ENCODE measurements at regions of chr1 and their contacts with region 1.

Region 1: GRCh38 chr1:247487057-247487456 is 29.2 kb upstream of the OR2B11 start:
- DNase-seq: peak in 23 of 42 donors; percentile 7 to 71 (median 36)

Region 2: DNA sequence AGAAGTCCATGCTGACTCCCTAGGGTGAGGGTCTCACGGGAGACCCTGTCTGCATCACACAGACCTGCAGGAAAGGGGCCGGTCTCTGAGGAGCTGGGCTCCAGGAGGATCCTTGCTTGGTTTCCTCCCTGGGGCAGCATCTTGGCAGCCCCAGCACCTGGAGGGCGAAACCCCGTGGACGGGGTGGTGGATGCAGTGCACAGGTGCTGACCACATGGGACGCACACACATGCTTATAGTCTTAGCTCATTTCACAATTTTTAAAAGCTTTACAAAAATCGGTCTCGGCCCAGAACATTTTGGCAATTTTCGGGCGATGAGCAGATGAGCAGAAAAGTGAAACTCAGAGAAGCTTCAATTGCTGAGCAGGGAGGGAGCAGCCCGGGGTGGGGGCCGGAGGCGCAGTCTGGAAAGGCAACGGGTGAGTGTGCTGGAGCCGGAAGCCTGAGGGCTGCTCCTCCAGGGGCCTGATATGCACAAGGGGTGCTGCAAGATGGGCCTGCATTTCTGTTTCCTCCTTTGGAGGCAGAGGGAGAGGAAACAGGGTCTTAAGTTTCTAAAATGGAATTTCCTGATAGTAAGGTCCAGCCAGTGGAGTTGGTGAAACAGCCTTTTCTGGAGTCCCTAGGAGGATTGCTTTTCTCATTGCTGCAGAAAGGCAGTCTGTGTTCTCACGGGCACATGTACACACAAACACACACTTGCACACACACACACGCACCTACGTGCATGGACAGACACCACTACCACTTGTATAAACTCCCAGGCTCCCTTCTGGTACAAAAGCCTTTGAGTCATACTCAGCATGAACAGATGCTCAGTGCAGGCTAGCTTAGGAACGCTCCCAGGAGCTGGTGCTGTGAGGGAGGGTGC is 702.2 kb before region 1 on chr1:
- intact Hi-C with region 1: no loop called
- DNase-seq: no peak

Region 3: GRCh38 chr1:247316590-247317197 is 170.4 kb before region 1 on chr1:
- intact Hi-C with region 1: no loop called
- DNase-seq: no peak

Region 4: GRCh38 chr1:247373721-247374141 is 113.3 kb before region 1 on chr1:
- intact Hi-C with region 1: loop called (anchors 5 kb)
- DNase-seq: peak in 35 of 42 donors; percentile 20 to 85 (median 44)